A673 (cell line): ENCODE measurements at regions of chr14 and their contacts with region 1.

Region 1: DNA sequence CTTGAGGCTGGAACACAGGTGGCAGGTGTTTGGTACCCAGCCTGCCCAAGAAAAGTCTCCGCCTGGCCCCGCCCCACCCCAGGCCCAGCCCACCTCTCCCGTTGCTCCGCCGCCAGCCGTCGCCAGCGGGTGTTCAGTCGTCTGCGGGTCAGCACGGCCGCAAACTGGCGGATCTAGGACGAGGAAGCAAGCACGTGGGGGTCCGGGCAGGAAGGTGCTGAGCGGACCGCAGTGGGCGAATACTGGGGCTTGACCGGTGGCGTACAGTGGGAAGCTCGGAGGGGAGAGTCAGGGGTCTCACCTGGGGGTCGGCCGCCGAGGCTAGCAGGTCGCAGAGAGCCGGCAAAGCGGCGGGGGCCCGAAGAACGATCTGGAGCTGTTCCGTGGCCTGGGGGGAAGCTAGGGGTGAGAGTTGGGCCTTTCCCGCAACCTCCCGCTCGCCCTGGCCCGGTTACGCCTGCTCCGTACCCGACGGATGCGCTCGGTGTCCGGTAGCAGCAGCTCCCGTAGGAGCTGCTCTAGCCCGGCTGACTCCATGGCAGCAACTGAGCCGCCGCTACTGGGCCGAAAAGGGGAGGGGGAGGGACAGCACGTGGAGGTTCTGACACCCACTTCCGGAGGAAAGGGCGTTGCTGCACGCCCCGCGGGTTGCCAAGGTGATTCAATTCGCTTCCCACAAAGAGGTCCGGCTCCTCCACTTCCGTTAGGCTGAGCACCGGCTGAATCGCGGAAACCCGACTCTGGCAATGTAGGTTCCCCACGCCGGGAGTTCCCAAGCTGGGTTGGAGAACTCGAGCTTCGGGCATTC is at the start of gene IPO4:
- DNase-seq: peak; percentile 99
- H3K4me3 ChIP-seq: peak within 1 kb of the TSS; percentile 79
- H3K27ac ChIP-seq: peak within 1 kb of the TSS; percentile 88
- H3K4me1 ChIP-seq: peaks cover 9% of the 10 kb centered on the region
- H3K27me3 ChIP-seq: no peaks in the 10 kb centered on the region
- CTCF ChIP-seq: no peak
- total RNA-seq, gene IPO4: 150 and 157 TPM in 2 replicates

Region 2: GRCh38 chr14:24146978-24147760 is 41.3 kb before region 1 on chr14 and contains the start of gene RNF31:
- CTCF ChIA-PET with region 1: no interaction called
- POLR2A ChIA-PET with region 1: no interaction called
- intact Hi-C with region 1: loop called (anchors 5 kb)
- DNase-seq: peak; percentile 99
- H3K4me3 ChIP-seq: peak within 1 kb of the TSS; percentile 90
- H3K27ac ChIP-seq: peak within 1 kb of the TSS; percentile 87
- H3K4me1 ChIP-seq: peaks cover 12% of the 10 kb centered on the region
- H3K27me3 ChIP-seq: no peaks in the 10 kb centered on the region
- CTCF ChIP-seq: no peak
- total RNA-seq, gene RNF31: 59.9 and 62.1 TPM in 2 replicates

Region 3: GRCh38 chr14:24171422-24172260 is 16.8 kb before region 1 on chr14 and contains the start of gene REC8:
- CTCF ChIA-PET with region 1: no interaction called
- POLR2A ChIA-PET with region 1: no interaction called
- intact Hi-C with region 1: no loop called
- DNase-seq: no peak
- H3K4me3 ChIP-seq: no peak within 1 kb of the TSS
- H3K27ac ChIP-seq: no peak within 1 kb of the TSS
- H3K4me1 ChIP-seq: no peaks in the 10 kb centered on the region
- H3K27me3 ChIP-seq: no peaks in the 10 kb centered on the region
- CTCF ChIP-seq: no peak
- total RNA-seq, gene REC8: 5.4 and 8.4 TPM in 2 replicates

Region 4: GRCh38 chr14:25570483-25570882 is 1382.0 kb after region 1 on chr14:
- CTCF ChIA-PET with region 1: no interaction called
- POLR2A ChIA-PET with region 1: no interaction called
- intact Hi-C with region 1: no loop called
- DNase-seq: no peak
- H3K4me3 ChIP-seq: no peak overlapping the region
- H3K27ac ChIP-seq: no peak overlapping the region
- H3K4me1 ChIP-seq: no peaks in the 10 kb centered on the region
- H3K27me3 ChIP-seq: no peaks in the 10 kb centered on the region
- CTCF ChIP-seq: no peak